Activated T-helper 2 cell treated with anti-CD3 and anti-CD28 coated beads, Interferon-gamma antibody, Interleukin-2, Interleukin-4, amounts not matched to agents 10 μg/mL and 5 μg/mL and 100 μg/mL, durations not matched to agents 14 hours and 24 hours and 36 hours (primary cell): ENCODE measurements at regions of chr13 and their contacts with region 1.

Region 1: DNA sequence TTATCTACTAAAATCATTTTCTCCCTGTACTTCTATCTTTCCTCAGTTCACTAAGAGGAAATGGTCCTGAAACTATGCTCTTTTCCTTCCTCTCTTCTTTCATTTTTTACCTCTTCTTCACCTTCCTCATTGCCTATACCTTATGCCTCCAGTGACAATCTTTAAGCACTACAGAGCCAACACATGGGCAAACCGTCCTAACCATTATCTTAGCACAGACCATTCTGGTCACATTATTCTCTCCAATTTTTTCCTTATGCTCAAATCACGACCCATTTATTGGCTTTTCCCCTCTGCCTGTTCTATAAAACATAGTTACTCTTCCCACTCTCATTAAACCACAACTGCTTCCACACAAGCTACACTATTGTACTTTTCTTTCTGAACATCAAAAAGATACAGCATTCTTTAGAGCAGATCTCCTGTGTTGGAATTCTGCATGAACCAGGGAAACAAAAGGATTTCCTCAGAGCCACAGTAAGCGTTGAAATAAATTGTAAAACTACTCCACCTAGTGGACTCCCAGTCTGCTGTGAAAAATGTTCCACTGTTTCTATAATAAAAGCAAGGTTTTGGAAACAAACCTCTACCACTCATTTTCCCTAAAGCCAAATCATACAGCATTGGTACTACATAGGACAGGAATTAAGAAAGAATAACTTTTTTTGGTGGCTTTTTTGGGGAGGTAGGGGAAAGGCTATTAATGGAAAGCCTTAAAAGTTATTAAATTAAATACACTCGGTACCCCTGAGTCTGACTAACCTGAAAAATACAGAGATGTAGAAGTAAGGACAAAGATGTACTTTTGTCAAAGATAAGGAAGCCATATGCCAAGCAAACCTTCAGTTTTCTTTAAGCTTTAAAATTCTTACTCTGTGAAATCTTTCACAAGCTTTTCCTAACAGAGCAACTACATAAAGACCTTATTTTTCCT is 19.5 kb downstream of the NUFIP1 start:
- DNase-seq: no peak
- H3K4me3 Mint-ChIP-seq: no peak overlapping the region
- H3K27ac Mint-ChIP-seq: no peak overlapping the region
- H3K4me1 Mint-ChIP-seq: peaks cover 8% of the 10 kb centered on the region
- H3K27me3 Mint-ChIP-seq: no peaks in the 10 kb centered on the region

Region 2: DNA sequence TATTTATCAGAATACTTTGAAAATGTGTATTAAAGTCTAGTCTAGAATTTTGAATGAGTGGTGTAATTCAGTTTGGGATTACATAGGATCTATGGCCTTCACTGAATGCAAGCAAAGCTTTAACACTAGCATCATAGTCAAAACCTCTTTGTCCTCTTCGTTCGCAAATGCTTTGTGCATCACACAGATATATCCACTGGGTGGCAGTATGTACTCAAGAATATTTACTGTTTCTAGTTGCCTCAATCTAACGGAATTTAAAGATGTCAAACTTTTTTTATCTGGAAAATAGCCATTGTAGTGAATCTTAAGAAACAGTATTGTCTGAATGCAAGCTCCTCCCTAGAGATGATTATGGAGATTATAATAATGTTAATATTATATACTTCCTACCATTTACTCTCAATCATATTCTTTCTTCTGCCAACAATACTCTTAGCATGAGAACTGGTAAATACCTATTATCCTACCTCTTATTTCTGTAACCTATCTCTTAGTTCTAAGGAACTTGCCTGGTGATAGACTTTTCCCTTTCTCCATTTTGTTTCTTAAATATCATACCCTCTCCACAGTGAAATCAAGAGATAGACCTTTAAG is 1064.3 kb before region 1 on chr13:
- intact Hi-C with region 1: loop called (anchors 10 kb)
- DNase-seq: no peak
- H3K4me3 Mint-ChIP-seq: no peak overlapping the region
- H3K27ac Mint-ChIP-seq: no peak overlapping the region
- H3K4me1 Mint-ChIP-seq: no peaks in the 10 kb centered on the region
- H3K27me3 Mint-ChIP-seq: peaks cover 24% of the 10 kb centered on the region

Region 3: GRCh38 chr13:44484562-44485138 is 485.2 kb before region 1 on chr13:
- intact Hi-C with region 1: loop called (anchors 1 kb)
- DNase-seq: no peak
- H3K4me3 Mint-ChIP-seq: no peak overlapping the region
- H3K27ac Mint-ChIP-seq: no peak overlapping the region
- H3K4me1 Mint-ChIP-seq: peaks cover 11% of the 10 kb centered on the region
- H3K27me3 Mint-ChIP-seq: peaks cover 6% of the 10 kb centered on the region

Region 4: DNA sequence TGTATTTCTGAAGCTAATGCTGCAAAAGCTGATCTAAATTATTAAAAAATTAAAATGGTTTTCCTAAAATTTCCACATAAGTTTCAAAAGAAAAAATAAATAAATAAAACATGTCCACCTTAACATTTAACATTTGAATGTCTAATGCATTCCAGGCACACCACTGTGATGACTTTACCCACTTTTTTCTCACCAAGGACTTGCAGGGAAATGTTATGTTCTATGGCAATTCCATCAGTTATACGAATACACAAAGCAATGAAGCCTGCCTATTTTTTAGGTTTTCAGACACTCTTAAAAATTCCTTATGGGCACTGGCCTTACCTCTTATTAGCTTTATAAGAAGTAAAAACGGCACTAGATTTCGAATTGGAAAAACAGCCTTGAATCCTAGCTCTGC is 403.9 kb before region 1 on chr13:
- intact Hi-C with region 1: no loop called
- DNase-seq: no peak
- H3K4me3 Mint-ChIP-seq: no peak overlapping the region
- H3K27ac Mint-ChIP-seq: no peak overlapping the region
- H3K4me1 Mint-ChIP-seq: peaks cover 1% of the 10 kb centered on the region
- H3K27me3 Mint-ChIP-seq: peaks cover 19% of the 10 kb centered on the region

Region 5: GRCh38 chr13:45073809-45074208 is 104.0 kb after region 1 on chr13:
- intact Hi-C with region 1: no loop called
- DNase-seq: no peak
- H3K4me3 Mint-ChIP-seq: no peak overlapping the region
- H3K27ac Mint-ChIP-seq: no peak overlapping the region
- H3K4me1 Mint-ChIP-seq: no peaks in the 10 kb centered on the region
- H3K27me3 Mint-ChIP-seq: peaks cover 29% of the 10 kb centered on the region

Region 6: GRCh38 chr13:45301243-45301642 is 331.4 kb after region 1 on chr13:
- intact Hi-C with region 1: loop called (anchors 10 kb)
- DNase-seq: no peak
- H3K4me3 Mint-ChIP-seq: no peak overlapping the region
- H3K27ac Mint-ChIP-seq: no peak overlapping the region
- H3K4me1 Mint-ChIP-seq: peaks cover 21% of the 10 kb centered on the region
- H3K27me3 Mint-ChIP-seq: peaks cover 10% of the 10 kb centered on the region